ENCODE measurements at regions of chr10 and their contacts with region 1.

Region 1: GRCh38 chr10:88386821-88387773 is 196.0 kb downstream of the RNLS start:
- DNase-seq: no peak
- ATAC-seq: peak; percentile 50
- H3K4me3 Mint-ChIP-seq: no peak overlapping the region
- H3K27ac Mint-ChIP-seq: no peak overlapping the region
- H3K4me1 Mint-ChIP-seq: peaks cover 32% of the 10 kb centered on the region
- H3K27me3 Mint-ChIP-seq: no peaks in the 10 kb centered on the region
- CTCF ChIP-seq: no peak

Region 2: DNA sequence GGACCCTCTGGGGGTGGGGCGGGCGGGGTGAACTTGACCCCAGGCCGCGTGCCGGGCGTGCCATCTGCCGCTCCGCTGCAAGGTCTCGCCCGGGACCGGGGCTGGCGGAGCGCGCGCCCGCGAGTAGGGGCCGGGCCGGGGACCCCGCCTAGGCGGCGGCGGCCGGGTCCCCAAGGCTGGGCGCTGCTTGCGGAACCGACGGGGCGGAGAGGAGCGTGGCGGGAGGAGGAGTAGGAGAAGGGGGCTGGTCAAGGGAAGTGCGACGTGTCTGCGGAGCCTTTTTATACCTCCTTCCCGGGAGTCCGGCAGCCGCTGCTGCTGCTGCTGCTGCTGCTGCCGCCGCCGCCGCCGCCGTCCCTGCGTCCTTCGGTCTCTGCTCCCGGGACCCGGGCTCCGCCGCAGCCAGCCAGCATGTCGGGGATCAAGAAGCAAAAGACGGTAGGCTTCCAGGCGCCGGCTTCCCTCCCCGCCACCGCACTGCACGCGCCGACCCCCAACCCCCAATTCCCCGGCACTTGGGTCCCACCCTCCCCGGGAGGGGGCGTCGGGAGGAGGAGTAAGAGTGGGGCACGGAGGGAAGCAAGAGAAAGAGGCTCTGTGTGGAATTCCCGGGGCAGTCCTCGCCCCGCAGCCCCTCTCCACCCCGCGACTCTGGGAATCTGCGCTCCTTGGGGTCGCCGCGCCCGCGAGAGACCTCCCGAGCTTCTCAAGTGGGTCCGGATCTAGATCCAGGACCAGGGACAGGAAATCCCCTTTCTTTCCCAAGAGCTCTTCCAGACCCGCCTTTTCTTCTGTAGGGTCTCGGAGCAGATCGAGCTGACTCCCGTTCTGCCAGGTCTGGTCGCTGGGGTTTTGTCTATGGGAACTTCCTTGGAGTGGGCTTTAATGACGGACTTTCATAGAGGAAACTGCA is 727.3 kb before region 1 on chr10 and contains the start of gene PAPSS2:
- CTCF ChIA-PET with region 1: no interaction called
- POLR2A ChIA-PET with region 1: no interaction called
- intact Hi-C with region 1: loop called (anchors 5 kb)
- DNase-seq: peak; percentile 32
- ATAC-seq: peak; percentile 49
- H3K4me3 Mint-ChIP-seq: peak within 1 kb of the TSS; percentile 82
- H3K27ac Mint-ChIP-seq: no peak within 1 kb of the TSS
- H3K4me1 Mint-ChIP-seq: peaks cover 13% of the 10 kb centered on the region
- H3K27me3 Mint-ChIP-seq: peaks cover 38% of the 10 kb centered on the region
- CTCF ChIP-seq: no peak
- total RNA-seq, gene PAPSS2: not detected in 2 replicates

Region 3: GRCh38 chr10:87952612-87953011 is 434.5 kb before region 1 on chr10:
- CTCF ChIA-PET with region 1: interaction called, 3 read pairs
- POLR2A ChIA-PET with region 1: interaction called, 8 read pairs
- intact Hi-C with region 1: loop called (anchors 5 kb)
- DNase-seq: no peak
- ATAC-seq: no peak
- H3K4me3 Mint-ChIP-seq: no peak overlapping the region
- H3K27ac Mint-ChIP-seq: peak overlapping the region; percentile 6
- H3K4me1 Mint-ChIP-seq: peaks cover 15% of the 10 kb centered on the region
- H3K27me3 Mint-ChIP-seq: no peaks in the 10 kb centered on the region
- CTCF ChIP-seq: no peak

Region 4: DNA sequence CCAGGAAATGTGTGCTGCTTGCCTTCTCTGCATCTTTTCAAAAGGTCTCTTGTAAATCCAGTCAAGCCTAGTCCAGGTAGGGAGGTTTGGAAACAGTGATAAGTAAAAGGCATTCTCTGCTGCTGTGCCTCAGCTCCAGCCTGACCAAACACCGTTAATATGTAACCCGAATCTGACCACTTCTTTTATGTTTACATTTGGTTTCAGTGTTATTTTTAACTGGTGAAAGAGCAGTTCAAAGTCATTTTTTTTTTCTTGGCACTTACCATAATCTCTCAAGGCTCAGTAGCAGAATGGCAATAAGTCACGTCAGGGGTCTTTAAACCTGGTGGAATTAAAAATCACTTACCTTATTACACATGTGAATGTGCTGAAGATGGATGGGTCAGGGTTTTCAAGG is 306.9 kb before region 1 on chr10:
- CTCF ChIA-PET with region 1: interaction called, 9 read pairs
- POLR2A ChIA-PET with region 1: interaction called, 10 read pairs
- intact Hi-C with region 1: no loop called
- DNase-seq: no peak
- ATAC-seq: no peak
- H3K4me3 Mint-ChIP-seq: peak overlapping the region; percentile 48
- H3K27ac Mint-ChIP-seq: peak overlapping the region; percentile 54
- H3K4me1 Mint-ChIP-seq: peaks cover 62% of the 10 kb centered on the region
- H3K27me3 Mint-ChIP-seq: no peaks in the 10 kb centered on the region
- CTCF ChIP-seq: no peak

Region 5: GRCh38 chr10:88216976-88217375 is 170.1 kb before region 1 on chr10:
- CTCF ChIA-PET with region 1: interaction called, 4 read pairs
- POLR2A ChIA-PET with region 1: interaction called, 5 read pairs
- intact Hi-C with region 1: loop called (anchors 5 kb)
- DNase-seq: no peak
- ATAC-seq: peak; percentile 56
- H3K4me3 Mint-ChIP-seq: no peak overlapping the region
- H3K27ac Mint-ChIP-seq: no peak overlapping the region
- H3K4me1 Mint-ChIP-seq: peaks cover 17% of the 10 kb centered on the region
- H3K27me3 Mint-ChIP-seq: no peaks in the 10 kb centered on the region
- CTCF ChIP-seq: no peak

Region 6: DNA sequence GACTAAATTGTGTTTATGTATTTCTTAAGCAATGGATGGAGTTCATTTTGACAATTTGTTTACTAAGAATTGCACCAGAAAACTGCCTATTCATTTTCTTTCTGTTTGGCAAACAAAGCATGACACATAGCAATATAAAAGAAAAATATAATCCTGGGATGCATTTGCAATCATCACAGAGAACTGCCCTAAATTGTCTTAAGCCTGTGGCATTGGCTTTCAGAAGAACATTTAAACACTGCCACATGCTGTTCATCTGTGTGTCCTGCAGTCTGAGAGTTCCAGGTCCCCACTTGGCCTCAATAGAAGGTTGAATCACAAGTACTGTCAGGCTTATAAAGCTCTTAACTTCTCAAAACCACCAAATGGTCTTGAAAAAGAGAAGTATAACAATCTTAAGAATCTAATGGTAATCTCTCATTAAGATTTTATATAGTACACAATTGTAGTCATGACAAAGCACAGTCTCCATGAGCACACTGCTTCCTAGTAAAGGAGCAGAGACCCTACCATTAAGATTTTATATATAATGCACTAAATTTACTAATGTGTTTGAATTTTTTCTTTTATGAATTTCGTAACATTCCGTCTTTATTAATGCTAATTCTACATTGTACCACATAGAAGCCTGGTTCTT is 166.1 kb after region 1 on chr10:
- CTCF ChIA-PET with region 1: interaction called, 14 read pairs
- POLR2A ChIA-PET with region 1: interaction called, 3 read pairs
- intact Hi-C with region 1: loop called (anchors 2 kb)
- DNase-seq: no peak
- ATAC-seq: peak; percentile 99
- H3K4me3 Mint-ChIP-seq: no peak overlapping the region
- H3K27ac Mint-ChIP-seq: no peak overlapping the region
- H3K4me1 Mint-ChIP-seq: no peaks in the 10 kb centered on the region
- H3K27me3 Mint-ChIP-seq: no peaks in the 10 kb centered on the region
- CTCF ChIP-seq: peak; percentile 55

Region 7: DNA sequence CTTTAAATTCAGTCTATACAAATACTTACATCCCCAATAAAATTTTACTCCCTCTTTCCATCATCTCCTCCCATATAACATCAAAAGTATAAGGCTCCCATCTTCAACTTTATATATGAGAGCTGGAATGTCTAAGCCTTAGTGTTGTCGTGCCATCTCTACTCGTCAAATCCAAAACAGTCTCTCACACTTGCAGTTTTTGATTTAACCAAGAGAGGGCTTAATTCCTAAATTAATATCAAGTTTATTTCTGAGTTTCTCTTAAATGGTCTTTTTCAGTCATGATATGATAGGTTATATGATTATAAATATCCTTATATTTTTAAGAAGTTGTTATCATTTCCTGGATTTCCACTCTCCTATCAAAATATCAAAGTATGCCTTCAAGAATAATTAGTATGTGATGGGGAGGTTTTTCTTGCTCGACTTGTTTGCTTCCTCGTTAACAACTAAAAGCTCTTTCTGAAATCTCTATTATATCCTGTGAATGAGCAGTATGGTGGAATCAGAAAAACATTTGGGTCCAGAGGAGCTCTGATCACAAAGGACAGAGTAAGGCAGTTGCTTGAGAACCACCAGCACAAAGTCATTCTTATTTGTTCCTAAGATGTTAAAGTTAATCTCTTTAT is 306.4 kb after region 1 on chr10:
- CTCF ChIA-PET with region 1: no interaction called
- POLR2A ChIA-PET with region 1: no interaction called
- intact Hi-C with region 1: no loop called
- DNase-seq: no peak
- ATAC-seq: no peak
- H3K4me3 Mint-ChIP-seq: no peak overlapping the region
- H3K27ac Mint-ChIP-seq: no peak overlapping the region
- H3K4me1 Mint-ChIP-seq: no peaks in the 10 kb centered on the region
- H3K27me3 Mint-ChIP-seq: peaks cover 14% of the 10 kb centered on the region
- CTCF ChIP-seq: no peak